ENCODE measurements at regions of chr3 and their contacts with region 1.

Region 1: GRCh38 chr3:52685709-52686691 is at the starts of genes GNL3 and PBRM1:
- DNase-seq: peak; percentile 82
- ATAC-seq: peak; percentile 74
- H3K4me3 ChIP-seq: peak within 1 kb of the TSS; percentile 91
- H3K27ac ChIP-seq: peak within 1 kb of the TSS; percentile 90
- H3K4me1 ChIP-seq: peaks cover 30% of the 10 kb centered on the region
- H3K27me3 ChIP-seq: no peaks in the 10 kb centered on the region
- CTCF ChIP-seq: no peak
- EP300 ChIP-seq: no peak
- POLR2A ChIP-seq: peak; percentile 93
- RAD21 ChIP-seq: no peak
- polyA plus RNA-seq, gene GNL3: 246 to 274 TPM
- polyA plus RNA-seq, gene PBRM1: 8.9 to 14.1 TPM

Region 2: GRCh38 chr3:52455283-52456168 is 230.5 kb before region 1 on chr3 and contains the start of gene NISCH:
- CTCF ChIA-PET with region 1: interaction called, 3 read pairs
- POLR2A ChIA-PET with region 1: no interaction called
- RAD21 ChIA-PET with region 1: no interaction called
- SMC1A ChIA-PET with region 1: no interaction called
- in situ Hi-C with region 1: no loop called
- intact Hi-C with region 1: loop called (anchors 10 kb)
- DNase-seq: peak; percentile 30
- ATAC-seq: peak; percentile 90
- H3K4me3 ChIP-seq: peak within 1 kb of the TSS; percentile 88
- H3K27ac ChIP-seq: peak within 1 kb of the TSS; percentile 84
- H3K4me1 ChIP-seq: peaks cover 36% of the 10 kb centered on the region
- H3K27me3 ChIP-seq: no peaks in the 10 kb centered on the region
- CTCF ChIP-seq: no peak
- EP300 ChIP-seq: no peak
- POLR2A ChIP-seq: peak; percentile 98
- RAD21 ChIP-seq: no peak
- polyA plus RNA-seq, gene NISCH: 0.76 to 1.5 TPM

Region 3: GRCh38 chr3:52649461-52650210 is 36.4 kb before region 1 on chr3:
- CTCF ChIA-PET with region 1: no interaction called
- POLR2A ChIA-PET with region 1: interaction called, 10 read pairs
- RAD21 ChIA-PET with region 1: no interaction called
- SMC1A ChIA-PET with region 1: no interaction called
- in situ Hi-C with region 1: no loop called
- intact Hi-C with region 1: no loop called
- DNase-seq: no peak
- ATAC-seq: no peak
- H3K4me3 ChIP-seq: no peak overlapping the region
- H3K27ac ChIP-seq: no peak overlapping the region
- H3K4me1 ChIP-seq: no peaks in the 10 kb centered on the region
- H3K27me3 ChIP-seq: no peaks in the 10 kb centered on the region
- CTCF ChIP-seq: no peak
- EP300 ChIP-seq: no peak
- POLR2A ChIP-seq: no peak
- RAD21 ChIP-seq: no peak

Region 4: GRCh38 chr3:52670621-52671521 is 15.1 kb before region 1 on chr3:
- CTCF ChIA-PET with region 1: interaction called, 9 read pairs
- POLR2A ChIA-PET with region 1: interaction called, 6 read pairs
- RAD21 ChIA-PET with region 1: interaction called, 3 read pairs
- SMC1A ChIA-PET with region 1: interaction called, 4 read pairs
- in situ Hi-C with region 1: no loop called
- intact Hi-C with region 1: loop called (anchors 1 kb)
- DNase-seq: peak; percentile 77
- ATAC-seq: peak; percentile 91
- H3K4me3 ChIP-seq: peak overlapping the region; percentile 3; the same call in 1 of the 2 replicates
- H3K27ac ChIP-seq: peak overlapping the region; percentile 80
- H3K4me1 ChIP-seq: peaks cover 31% of the 10 kb centered on the region
- H3K27me3 ChIP-seq: no peaks in the 10 kb centered on the region
- CTCF ChIP-seq: no peak
- EP300 ChIP-seq: peak; percentile 80 to 86; a peak in 3 of 4 replicates
- POLR2A ChIP-seq: no peak
- RAD21 ChIP-seq: no peak

Region 5: DNA sequence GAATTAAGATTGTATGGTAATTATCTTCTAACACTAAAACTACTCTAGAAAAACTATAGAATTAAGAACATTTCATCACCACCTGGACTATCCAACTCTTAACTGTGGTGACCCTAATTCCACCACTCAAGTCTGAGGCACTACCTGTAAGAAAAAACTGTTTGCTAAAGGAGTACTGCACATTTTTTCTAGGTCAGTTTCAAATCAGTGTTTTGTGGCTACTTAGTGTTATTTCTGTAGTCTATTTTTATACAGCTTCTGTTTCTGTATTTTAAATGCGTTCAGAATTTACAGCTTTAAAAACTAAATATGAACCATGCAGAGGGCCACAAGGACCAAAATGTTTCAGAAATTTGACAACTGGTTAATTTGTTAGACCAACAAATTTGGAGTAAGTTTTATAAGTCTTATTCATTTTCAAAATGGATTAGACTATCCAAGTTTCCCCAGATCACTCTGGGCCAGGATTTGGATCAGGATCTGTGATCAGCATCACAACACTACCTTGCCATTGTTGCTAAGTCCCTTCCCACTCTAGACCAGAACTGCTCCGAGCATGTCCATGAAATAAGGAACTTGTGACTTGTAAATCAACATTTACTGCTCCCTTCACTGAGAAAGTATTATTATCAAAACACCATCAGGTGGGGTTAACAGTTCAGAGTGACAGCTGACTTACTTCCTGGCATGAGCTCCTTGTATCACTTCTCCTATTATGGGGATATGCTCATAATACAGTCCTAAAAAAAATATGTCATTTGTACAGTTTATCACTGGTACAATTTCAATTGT is 11.0 kb after region 1 on chr3:
- CTCF ChIA-PET with region 1: interaction called, 4 read pairs
- POLR2A ChIA-PET with region 1: interaction called, 20 read pairs
- RAD21 ChIA-PET with region 1: interaction called, 6 read pairs
- SMC1A ChIA-PET with region 1: interaction called, 6 read pairs
- in situ Hi-C with region 1: no loop called
- intact Hi-C with region 1: no loop called
- DNase-seq: no peak
- ATAC-seq: peak; percentile 62
- H3K4me3 ChIP-seq: no peak overlapping the region; the same call in 1 of the 2 replicates
- H3K27ac ChIP-seq: peak overlapping the region; percentile 91
- H3K4me1 ChIP-seq: peaks cover 36% of the 10 kb centered on the region
- H3K27me3 ChIP-seq: no peaks in the 10 kb centered on the region
- CTCF ChIP-seq: no peak
- EP300 ChIP-seq: peak in 1 of 2 experiments; percentile 40; a peak in 1 of 4 replicates
- POLR2A ChIP-seq: 0 out of 2 replicates have a peak, but pooled peaks have one; percentile 31
- RAD21 ChIP-seq: no peak

Region 6: GRCh38 chr3:52705688-52706686 is 20.0 kb after region 1 on chr3 and contains the starts of genes GLT8D1 and SPCS1:
- CTCF ChIA-PET with region 1: interaction called, 4 read pairs
- POLR2A ChIA-PET with region 1: interaction called, 15 read pairs
- RAD21 ChIA-PET with region 1: interaction called, 4 read pairs
- SMC1A ChIA-PET with region 1: interaction called, 8 read pairs
- in situ Hi-C with region 1: no loop called
- intact Hi-C with region 1: loop called (anchors 2 kb)
- DNase-seq: no peak
- ATAC-seq: peak; percentile 92
- H3K4me3 ChIP-seq: peak within 1 kb of the TSS; percentile 90
- H3K27ac ChIP-seq: peak within 1 kb of the TSS; percentile 75
- H3K4me1 ChIP-seq: peaks cover 30% of the 10 kb centered on the region
- H3K27me3 ChIP-seq: no peaks in the 10 kb centered on the region
- CTCF ChIP-seq: no peak
- EP300 ChIP-seq: no peak
- POLR2A ChIP-seq: peak; percentile 93
- RAD21 ChIP-seq: no peak
- polyA plus RNA-seq, gene GLT8D1: 25.3 to 32.6 TPM
- polyA plus RNA-seq, gene SPCS1: 814 to 994 TPM